ENCODE measurements at regions of chr18 and their contacts with region 1.

Region 1: DNA sequence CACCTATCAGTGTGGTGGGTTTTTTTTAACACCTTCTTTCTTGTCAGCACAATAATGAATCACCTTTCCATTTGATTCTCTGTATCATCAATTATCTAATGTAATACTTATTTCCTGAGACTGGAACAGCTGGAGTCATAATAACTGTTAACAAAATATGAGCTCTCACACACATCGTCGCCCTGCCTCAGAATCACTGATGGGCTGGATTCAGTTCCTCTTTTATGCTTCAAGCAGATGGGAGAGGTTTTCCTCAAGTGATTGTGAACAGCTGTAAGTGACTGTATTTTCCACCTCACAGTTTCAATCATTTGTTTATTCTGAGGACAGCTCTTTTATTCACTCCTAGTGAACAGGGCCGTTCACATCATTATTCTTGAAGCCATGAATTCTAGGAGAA is 330.2 kb downstream of the DSC3 start:
- DNase-seq: no peak
- ATAC-seq: no peak
- H3K4me3 ChIP-seq: no peak overlapping the region
- H3K27ac ChIP-seq: no peak overlapping the region
- H3K4me1 ChIP-seq: peaks cover 0 to 4% (median 0%) of the 10 kb centered on the region in 9 donors
- H3K27me3 ChIP-seq: no peaks in the 10 kb centered on the region
- CTCF ChIP-seq: no peak

Region 2: GRCh38 chr18:30588673-30589164 is 123.7 kb before region 1 on chr18:
- intact Hi-C with region 1: no loop called
- DNase-seq: no peak
- ATAC-seq: no peak
- H3K4me3 ChIP-seq: no peak overlapping the region
- H3K27ac ChIP-seq: no peak overlapping the region
- H3K4me1 ChIP-seq: no peaks in the 10 kb centered on the region
- H3K27me3 ChIP-seq: no peaks in the 10 kb centered on the region
- CTCF ChIP-seq: no peak

Region 3: DNA sequence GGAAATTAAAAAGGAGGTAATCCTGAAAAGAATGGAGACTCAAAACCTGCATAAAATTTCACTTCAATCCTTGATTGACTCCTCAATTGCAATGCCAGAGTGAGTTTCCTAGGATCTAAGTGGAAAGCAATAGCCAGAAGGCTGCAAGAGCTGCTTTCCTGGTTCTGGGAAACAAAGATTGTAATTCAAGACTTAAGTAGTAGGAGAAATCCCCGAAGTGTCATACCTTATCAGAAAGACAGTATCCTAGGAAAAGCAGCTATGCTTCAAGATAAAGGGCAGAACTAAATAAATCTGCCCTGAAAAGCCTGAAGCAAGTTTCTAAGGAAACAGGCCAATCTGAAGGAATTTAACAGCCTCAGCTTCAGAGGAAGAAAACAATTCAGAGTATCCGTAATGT is 60.0 kb before region 1 on chr18:
- intact Hi-C with region 1: loop called in 1 of 10 experiments (anchors 10 kb)
- DNase-seq: no peak
- ATAC-seq: no peak
- H3K4me3 ChIP-seq: no peak overlapping the region
- H3K27ac ChIP-seq: no peak overlapping the region
- H3K4me1 ChIP-seq: no peaks in the 10 kb centered on the region
- H3K27me3 ChIP-seq: no peaks in the 10 kb centered on the region
- CTCF ChIP-seq: no peak

Region 4: GRCh38 chr18:30763902-30764350 is 51.5 kb after region 1 on chr18:
- intact Hi-C with region 1: loop called in 1 of 10 experiments (anchors 10 kb)
- DNase-seq: no peak
- ATAC-seq: no peak
- H3K4me3 ChIP-seq: no peak overlapping the region
- H3K27ac ChIP-seq: no peak overlapping the region
- H3K4me1 ChIP-seq: no peaks in the 10 kb centered on the region
- H3K27me3 ChIP-seq: no peaks in the 10 kb centered on the region
- CTCF ChIP-seq: no peak

Region 5: GRCh38 chr18:30852980-30853379 is 140.6 kb after region 1 on chr18:
- intact Hi-C with region 1: no loop called
- DNase-seq: no peak
- ATAC-seq: no peak
- H3K4me3 ChIP-seq: no peak overlapping the region
- H3K27ac ChIP-seq: no peak overlapping the region
- H3K4me1 ChIP-seq: no peaks in the 10 kb centered on the region
- H3K27me3 ChIP-seq: no peaks in the 10 kb centered on the region
- CTCF ChIP-seq: no peak

Measured in heart right ventricle (tissue), 16 donors.